ENCODE measurements at regions of chr1 and their contacts with region 1.

Region 1: GRCh38 chr1:90045853-90046563 is 51.1 kb downstream of the ZNF326 start:
- DNase-seq: peak; percentile 82
- H3K4me3 ChIP-seq: no peak overlapping the region
- H3K27ac ChIP-seq: peak overlapping the region; percentile 24
- H3K4me1 ChIP-seq: peaks cover 42% of the 10 kb centered on the region
- H3K27me3 ChIP-seq: no peaks in the 10 kb centered on the region
- CTCF ChIP-seq: peak; percentile 85

Region 2: DNA sequence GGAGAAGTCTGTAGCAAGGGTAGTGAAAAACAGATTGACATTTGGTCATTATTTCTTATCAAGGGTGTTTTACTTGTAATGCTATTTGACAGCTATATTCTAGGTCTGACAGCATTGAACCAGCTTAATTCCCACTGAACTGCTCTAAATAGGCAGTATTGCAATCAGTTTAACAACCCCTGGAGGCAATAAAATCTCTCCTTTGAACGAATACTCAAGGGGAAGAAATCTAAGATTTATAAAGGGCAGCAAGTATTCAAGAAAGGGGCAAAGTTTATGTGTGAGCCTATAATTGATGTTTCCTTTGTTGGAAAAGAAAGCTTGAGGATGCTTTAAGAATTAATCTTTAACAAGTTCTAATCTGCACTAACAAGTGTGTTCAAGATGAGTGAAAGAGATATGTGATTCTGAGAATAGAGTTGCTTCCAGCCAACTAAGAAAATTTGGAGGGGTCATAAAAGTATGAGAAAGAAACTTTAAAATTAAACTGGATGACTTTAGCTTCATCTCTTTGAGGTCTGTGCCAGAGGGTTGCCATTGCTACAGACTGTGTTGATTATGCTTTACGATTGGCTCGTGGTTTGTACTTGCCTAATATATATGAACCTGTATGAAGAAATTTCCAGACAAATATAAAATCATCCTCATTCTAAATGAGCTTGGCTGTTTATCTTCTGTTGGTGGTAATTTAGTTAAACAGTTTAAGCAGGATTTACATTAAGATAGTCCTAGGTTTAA is 21.4 kb after region 1 on chr1:
- CTCF ChIA-PET with region 1: interaction called, 10 read pairs
- POLR2A ChIA-PET with region 1: no interaction called
- intact Hi-C with region 1: loop called (anchors 1 kb)
- DNase-seq: peak; percentile 96
- H3K4me3 ChIP-seq: no peak overlapping the region
- H3K27ac ChIP-seq: peak overlapping the region; percentile 95
- H3K4me1 ChIP-seq: peaks cover 55% of the 10 kb centered on the region
- H3K27me3 ChIP-seq: no peaks in the 10 kb centered on the region
- CTCF ChIP-seq: no peak

Region 3: DNA sequence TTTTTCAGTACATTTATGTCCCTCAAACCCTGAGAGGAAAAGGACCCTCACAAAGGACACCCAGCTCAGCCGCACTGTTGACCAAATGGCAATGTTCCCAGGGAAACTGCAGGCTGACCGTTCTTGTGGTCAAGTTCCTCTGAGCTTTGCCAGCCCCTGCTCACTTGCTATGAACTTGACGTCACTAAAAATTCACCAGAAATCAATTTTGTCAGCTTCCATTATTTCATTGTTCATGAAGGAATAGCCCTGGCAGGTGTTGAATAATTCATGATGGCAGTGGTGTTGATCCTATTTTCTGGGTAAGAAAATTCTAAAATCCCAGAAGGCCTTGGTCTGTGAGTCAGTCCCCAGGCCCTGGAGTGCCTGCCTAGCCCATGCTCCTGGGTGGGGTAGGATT is 267.7 kb after region 1 on chr1:
- CTCF ChIA-PET with region 1: no interaction called
- POLR2A ChIA-PET with region 1: no interaction called
- intact Hi-C with region 1: loop called (anchors 1 kb)
- DNase-seq: peak; percentile 57
- H3K4me3 ChIP-seq: no peak overlapping the region
- H3K27ac ChIP-seq: peak overlapping the region; percentile 66
- H3K4me1 ChIP-seq: peaks cover 62% of the 10 kb centered on the region
- H3K27me3 ChIP-seq: no peaks in the 10 kb centered on the region
- CTCF ChIP-seq: no peak

Region 4: DNA sequence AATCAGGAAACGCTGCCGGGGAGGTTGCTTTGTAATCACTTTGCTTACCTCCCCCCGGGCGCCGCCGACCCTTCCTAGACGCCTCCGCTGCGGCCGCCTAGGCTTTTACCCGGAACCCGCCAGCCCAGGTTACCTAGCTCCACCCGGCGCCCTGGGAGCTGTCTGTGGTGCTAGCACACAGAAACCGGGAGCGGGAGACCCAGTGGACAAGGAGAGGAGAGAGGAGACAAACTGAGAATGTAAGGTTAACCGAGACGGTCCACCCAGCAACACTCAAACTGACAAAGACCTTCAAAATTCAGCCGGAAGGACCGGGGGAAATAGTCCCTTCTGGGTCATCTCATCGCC is 661.3 kb after region 1 on chr1:
- CTCF ChIA-PET with region 1: no interaction called
- POLR2A ChIA-PET with region 1: no interaction called
- intact Hi-C with region 1: loop called (anchors 5 kb)
- DNase-seq: peak; percentile 82
- H3K4me3 ChIP-seq: peak overlapping the region; percentile 50
- H3K27ac ChIP-seq: peak overlapping the region; percentile 91
- H3K4me1 ChIP-seq: peaks cover 55% of the 10 kb centered on the region
- H3K27me3 ChIP-seq: no peaks in the 10 kb centered on the region
- CTCF ChIP-seq: no peak

Region 5: DNA sequence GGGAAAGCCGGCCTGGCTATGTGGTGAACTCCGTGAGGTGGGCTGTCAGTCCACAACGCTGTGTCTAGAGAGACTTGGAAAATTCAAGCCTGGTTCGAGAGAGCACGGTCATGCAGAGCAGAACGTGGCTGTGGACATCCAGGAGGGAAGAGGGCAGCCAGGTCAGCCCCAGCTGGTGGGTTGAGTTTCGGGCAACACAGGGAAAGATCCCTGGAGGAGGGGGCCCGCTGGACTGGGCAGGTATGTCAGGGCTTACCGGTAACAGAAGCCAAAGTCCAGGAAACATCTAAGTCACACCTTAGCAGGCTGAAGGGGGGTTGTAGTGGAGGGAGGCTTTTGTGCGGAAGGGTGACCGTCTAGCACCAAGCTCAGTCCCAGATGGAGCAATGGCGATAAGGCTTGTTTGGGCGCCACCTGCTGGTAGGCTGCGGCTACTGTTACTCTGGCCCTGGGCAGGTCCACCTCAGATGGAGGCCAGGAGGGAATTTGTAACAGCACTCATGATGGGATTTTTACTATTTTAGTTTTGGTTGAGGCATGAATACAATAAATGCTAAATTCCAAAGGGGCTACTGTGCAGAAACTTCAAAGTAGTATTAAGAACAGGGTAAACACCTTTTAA is 1119.1 kb after region 1 on chr1:
- CTCF ChIA-PET with region 1: interaction called, 19 read pairs
- POLR2A ChIA-PET with region 1: no interaction called
- intact Hi-C with region 1: loop called (anchors 1 kb)
- DNase-seq: peak; percentile 83
- H3K4me3 ChIP-seq: no peak overlapping the region
- H3K27ac ChIP-seq: no peak overlapping the region
- H3K4me1 ChIP-seq: peaks cover 4% of the 10 kb centered on the region
- H3K27me3 ChIP-seq: no peaks in the 10 kb centered on the region
- CTCF ChIP-seq: peak; percentile 98

Measured in A673 (cell line).